HEK293 (cell line): ENCODE measurements at regions of chr6 and their contacts with region 1.

Region 1: DNA sequence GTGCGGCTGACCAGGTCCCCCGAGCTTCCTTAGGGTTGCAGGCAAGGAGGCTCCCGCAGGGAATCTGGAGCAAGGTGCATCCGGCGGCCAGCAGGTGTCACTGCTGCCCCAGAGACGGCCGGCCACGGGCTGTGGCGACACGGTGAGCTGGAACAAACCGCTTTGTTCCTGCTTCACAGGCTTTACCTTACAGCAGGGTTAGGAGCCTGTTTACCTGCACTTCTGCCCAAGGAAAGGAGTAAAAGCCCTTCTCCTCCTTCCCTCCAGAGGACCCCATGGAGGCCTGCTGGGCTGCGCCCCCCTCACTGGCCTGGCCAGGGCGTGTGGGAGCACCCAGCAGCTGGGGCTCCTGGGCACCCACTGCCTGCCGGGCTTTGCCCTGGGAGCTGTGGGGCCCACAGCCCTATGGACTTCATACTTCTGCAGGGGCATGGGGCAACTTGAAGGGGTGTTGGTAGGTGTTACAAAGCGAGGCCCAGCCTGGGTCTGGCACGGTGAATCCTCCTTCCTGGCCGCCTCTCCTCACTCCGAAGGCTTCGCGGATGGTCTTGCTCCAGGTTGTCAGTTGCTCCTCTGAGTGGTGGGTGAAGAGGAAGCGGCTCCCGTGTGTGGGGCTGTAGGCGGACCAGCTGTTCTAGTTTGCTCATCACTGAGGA is 88.4 kb downstream of the CDC5L start:
- H3K4me3 ChIP-seq: no peak overlapping the region
- H3K27ac ChIP-seq: peak overlapping the region; percentile 0; the same call in 1 of the 2 replicates
- H3K4me1 ChIP-seq: no peaks in the 10 kb centered on the region
- CTCF ChIP-seq: peak; percentile 97

Region 2: DNA sequence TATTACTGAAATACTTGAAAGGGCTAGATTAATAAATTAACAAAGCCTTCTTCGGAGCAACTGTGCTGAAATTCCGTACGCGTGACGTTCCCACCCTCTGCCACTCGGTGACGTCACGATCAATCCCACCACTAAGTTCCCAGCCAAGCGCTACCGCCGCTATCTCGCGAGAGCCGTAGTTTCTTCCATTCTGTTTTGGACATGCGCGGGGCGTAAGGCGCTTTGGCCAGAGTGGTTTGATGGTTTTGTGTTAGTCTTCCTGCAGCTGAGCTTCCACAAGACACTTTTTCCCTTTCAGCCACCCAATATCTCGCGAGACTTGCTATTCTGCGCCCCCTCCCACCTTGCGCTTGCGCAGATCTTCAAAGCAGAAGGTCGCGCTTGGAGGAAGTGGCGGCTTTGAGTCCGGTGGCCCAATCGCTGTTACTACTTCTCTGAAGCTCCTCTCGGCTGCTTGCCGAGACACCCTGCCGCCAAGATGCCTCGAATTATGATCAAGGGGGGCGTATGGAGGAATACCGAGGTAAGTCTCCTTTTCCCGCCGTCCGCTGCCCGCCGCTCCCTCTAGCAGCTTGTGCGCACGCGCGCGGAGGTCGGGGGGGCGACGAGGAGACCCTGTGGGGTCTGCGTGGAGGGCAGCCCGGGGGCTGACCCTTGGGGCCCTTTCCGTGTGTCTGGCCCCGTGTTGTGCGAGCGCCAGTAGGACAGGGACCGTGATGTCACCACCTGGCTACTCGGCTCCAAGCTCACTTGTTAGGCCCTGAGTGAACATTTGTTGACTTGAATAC is 88.4 kb before region 1 on chr6 and contains the start of gene CDC5L:
- CTCF ChIA-PET with region 1: no interaction called
- POLR2A ChIA-PET with region 1: no interaction called
- H3K4me3 ChIP-seq: peak within 1 kb of the TSS; percentile 76
- H3K27ac ChIP-seq: peak within 1 kb of the TSS; percentile 96
- H3K4me1 ChIP-seq: peaks cover 8% of the 10 kb centered on the region
- CTCF ChIP-seq: 0 out of 2 replicates have a peak, but pooled peaks have one; percentile 22

Region 3: DNA sequence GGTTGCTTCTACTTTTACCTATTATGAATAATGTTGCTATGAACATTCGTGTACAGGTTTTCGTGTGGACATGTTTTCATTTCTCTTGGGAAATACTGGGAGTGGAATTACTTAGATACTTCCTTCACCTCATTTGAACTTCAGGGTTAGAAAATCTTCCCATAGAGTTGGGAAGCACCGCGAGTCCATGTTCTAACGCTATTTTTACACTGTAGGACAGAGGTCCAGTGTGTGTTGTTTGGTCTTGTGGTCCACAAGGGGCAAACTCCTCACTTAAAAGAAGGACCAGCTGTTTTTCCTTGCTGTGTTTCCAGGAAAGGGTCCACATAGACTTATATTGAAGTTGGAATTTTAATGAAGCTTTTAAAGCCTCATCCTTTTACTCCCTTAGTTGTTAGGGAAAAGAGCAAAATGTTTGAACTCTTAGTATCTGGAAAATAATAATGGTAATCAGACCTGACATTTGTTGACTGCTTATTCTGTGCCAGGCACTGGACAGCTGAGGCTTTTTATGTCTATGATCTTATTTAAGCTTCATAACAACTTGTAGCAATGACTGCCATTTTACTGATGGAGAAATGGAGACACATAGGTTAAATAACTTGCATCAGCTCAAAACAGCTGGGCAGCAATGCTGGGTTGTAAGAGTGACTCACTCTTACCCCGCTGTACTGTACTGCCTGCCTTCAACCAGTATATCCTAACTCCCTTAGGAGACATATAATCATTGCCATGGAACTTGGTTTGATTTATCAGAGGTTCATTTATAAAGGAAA is 36.4 kb before region 1 on chr6:
- CTCF ChIA-PET with region 1: interaction called, 14 read pairs
- POLR2A ChIA-PET with region 1: no interaction called
- H3K4me3 ChIP-seq: no peak overlapping the region
- H3K27ac ChIP-seq: no peak overlapping the region
- H3K4me1 ChIP-seq: peaks cover 10% of the 10 kb centered on the region
- CTCF ChIP-seq: no peak

Region 4: DNA sequence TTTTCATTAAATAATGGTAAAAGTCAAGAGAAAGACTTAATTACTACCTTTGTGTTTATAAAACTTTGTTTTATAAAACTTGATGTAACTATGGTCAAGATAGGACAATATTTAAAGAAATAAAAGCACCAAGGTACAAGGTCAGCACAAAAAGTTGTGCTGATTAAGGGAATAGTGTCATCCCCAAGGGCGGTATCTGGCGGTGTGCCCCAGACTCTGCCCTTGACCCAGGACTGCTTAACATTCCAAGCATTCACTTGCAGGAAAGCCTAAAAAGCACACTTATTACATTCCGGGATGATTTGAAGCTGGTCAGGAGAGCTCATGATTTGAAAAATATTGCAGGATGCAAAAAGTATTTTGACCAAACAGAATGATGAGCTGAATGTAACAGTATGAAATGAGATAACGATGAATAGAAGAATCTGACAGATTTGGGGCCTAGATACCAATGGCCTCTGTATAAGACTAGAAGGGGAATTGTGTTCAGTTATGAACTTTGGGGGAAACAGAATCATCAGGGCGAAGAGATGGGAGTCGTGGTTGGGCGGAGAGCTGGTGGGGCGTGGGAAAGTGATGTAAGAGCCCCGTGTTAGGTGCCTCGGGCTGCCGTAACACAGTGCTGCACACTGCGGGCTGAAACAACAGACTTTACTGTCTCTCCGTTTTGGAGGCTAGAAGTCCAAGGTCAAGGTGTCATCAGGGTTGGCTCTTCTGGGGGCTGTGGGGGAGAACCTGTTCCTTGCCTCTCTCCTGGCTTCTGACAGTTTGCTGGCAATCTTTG is 11.2 kb before region 1 on chr6:
- CTCF ChIA-PET with region 1: interaction called, 87 read pairs
- POLR2A ChIA-PET with region 1: no interaction called
- H3K4me3 ChIP-seq: no peak overlapping the region
- H3K27ac ChIP-seq: no peak overlapping the region
- H3K4me1 ChIP-seq: no peaks in the 10 kb centered on the region
- CTCF ChIP-seq: no peak

Region 5: DNA sequence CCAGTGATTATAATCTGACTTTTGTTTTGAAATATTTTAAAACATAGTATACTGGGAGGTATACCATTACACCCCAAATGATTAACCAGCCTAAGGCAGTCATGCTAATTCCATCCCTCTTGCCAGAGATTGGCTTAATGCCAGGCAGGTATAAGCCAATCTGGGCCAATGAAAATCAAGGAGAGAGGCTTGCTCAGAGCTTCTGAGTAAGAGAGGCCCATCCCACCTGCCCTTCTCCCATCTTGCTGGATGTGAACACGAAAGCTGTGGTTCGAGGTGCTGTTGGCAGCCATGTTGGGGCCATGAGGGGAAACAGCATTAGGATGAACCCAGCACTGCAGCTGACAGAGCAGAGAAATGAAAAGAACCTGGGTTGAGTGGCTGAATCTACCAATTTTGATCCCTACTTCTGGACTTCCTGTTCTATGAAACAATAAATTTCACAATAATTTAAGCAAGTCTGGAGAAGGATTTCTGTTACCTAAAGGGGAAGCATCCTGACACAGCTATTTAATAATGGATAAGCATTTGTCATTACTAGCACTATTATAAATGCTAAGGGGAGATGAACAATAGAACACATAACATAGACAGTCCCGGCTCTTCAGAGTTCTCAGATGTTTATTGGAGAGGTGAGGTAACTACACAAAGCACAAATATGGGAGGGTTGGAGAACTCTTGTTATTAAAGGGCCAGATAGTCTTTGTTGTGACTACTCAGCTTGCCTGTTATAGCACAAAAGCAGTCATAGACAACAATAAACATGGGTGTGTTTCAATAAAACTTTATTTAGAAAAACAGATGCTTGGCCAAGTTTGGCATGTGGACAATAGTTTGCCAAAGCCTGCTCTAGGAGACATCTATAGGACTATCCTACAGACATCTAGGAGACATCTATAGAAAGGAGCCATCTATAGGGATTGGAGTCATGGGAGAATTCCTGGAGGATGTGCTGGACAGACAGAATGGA is 64.1 kb after region 1 on chr6:
- CTCF ChIA-PET with region 1: interaction called, 11 read pairs
- POLR2A ChIA-PET with region 1: no interaction called
- H3K4me3 ChIP-seq: no peak overlapping the region
- H3K27ac ChIP-seq: no peak overlapping the region
- H3K4me1 ChIP-seq: peaks cover 3% of the 10 kb centered on the region; the same call in 1 of the 2 replicates
- CTCF ChIP-seq: no peak

Region 6: DNA sequence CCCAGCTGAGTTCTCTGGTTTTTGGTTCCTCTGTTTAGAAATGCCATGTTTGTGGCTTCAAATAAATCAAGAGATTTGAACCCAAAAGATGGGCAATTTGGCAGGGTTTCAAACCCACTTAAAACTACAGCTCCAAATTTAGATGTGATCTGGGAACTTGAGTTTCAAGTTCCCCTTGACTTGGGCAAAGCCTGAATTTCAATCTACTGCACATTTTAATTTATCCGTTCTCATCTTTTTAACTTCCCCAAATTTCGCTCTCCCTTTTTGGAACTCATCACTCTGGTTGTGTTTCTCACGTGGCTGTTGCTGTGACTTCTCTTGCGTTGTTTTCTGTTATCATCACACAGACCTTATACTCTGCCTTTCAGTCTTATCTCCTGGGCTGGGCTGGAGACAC is 142.5 kb after region 1 on chr6:
- CTCF ChIA-PET with region 1: interaction called, 10 read pairs
- POLR2A ChIA-PET with region 1: no interaction called
- H3K4me3 ChIP-seq: no peak overlapping the region
- H3K27ac ChIP-seq: no peak overlapping the region
- H3K4me1 ChIP-seq: no peaks in the 10 kb centered on the region
- CTCF ChIP-seq: no peak

Region 7: DNA sequence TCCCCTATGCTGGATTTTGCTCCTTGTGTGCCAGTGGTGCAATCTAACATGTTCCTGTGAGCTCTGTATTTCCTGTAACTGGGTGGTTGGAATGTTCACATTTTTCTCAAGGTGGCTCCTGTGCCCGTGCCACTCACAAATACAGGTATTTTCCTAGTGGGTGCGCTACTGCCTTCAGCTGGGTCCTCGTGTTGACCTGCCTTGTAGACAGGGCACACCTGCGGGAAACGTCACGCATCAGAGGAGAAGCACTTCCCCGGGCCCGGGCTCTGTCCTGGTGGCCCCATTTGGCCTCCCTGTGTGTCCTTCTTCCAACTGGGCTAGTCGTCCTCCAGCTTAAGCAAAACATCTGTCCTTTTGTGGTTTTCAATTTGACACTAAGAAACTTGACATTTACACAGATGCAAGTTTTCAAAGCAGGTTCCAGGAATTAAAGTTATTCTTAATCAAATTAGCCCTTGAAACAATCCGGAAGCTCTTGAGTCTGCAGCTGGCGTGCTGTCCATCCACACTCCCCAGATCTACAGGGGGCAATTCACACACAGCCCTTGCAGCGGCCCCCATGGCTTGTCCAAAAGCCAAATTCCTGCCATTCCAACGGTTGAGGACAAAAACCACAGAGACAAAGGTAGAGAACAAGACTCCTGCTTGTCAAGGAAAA is 186.7 kb after region 1 on chr6:
- CTCF ChIA-PET with region 1: interaction called, 11 read pairs
- POLR2A ChIA-PET with region 1: no interaction called
- H3K4me3 ChIP-seq: no peak overlapping the region
- H3K27ac ChIP-seq: no peak overlapping the region
- H3K4me1 ChIP-seq: peaks cover 14% of the 10 kb centered on the region
- CTCF ChIP-seq: no peak